ENCODE measurements at regions of chr13 and their contacts with region 1.

Region 1: DNA sequence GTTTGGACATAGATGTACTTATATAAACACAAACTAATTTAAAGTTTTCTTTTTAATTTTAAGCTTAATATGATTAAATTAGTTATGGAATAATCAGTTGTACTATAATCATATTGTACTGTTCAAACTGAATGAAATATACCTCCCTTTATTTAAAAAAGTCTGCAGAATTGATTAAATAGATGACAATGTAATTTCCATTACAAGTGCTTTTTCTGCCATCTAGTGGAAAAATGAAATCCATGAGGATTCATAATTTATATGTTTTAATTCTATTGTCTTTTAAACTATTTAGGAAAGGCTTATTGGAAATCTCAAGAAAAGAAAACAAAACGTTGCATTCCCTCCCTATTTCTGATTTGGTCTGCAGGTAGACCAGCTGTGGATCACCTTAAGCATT is 30.9 kb downstream of the MZT1 start:
- DNase-seq: peak; percentile 10
- ATAC-seq: no peak
- H3K4me3 ChIP-seq: no peak overlapping the region
- H3K27ac ChIP-seq: no peak overlapping the region
- H3K4me1 ChIP-seq: no peaks in the 10 kb centered on the region
- H3K27me3 ChIP-seq: no peaks in the 10 kb centered on the region; the same call in 1 of the 2 replicates
- CTCF ChIP-seq: peak; percentile 47
- POLR2A ChIP-seq: no peak
- RAD21 ChIP-seq: peak; percentile 50

Region 2: GRCh38 chr13:70960841-70961443 is 1735.6 kb before region 1 on chr13:
- CTCF ChIA-PET with region 1: no interaction called
- POLR2A ChIA-PET with region 1: no interaction called
- dilution Hi-C with region 1: no loop called
- in situ Hi-C with region 1: loop called (anchors 25 kb)
- intact Hi-C with region 1: loop called (anchors 10 kb)
- DNase-seq: peak; percentile 13
- ATAC-seq: no peak
- H3K4me3 ChIP-seq: no peak overlapping the region
- H3K27ac ChIP-seq: no peak overlapping the region
- H3K4me1 ChIP-seq: no peaks in the 10 kb centered on the region
- H3K27me3 ChIP-seq: no peaks in the 10 kb centered on the region
- CTCF ChIP-seq: peak; percentile 51
- POLR2A ChIP-seq: no peak
- RAD21 ChIP-seq: peak; percentile 48

Region 3: GRCh38 chr13:72643311-72643989 is 53.1 kb before region 1 on chr13:
- CTCF ChIA-PET with region 1: interaction called, 4 read pairs
- POLR2A ChIA-PET with region 1: no interaction called
- dilution Hi-C with region 1: no loop called
- in situ Hi-C with region 1: no loop called
- intact Hi-C with region 1: loop called (anchors 1 kb)
- DNase-seq: peak; percentile 44
- ATAC-seq: peak; percentile 60
- H3K4me3 ChIP-seq: no peak overlapping the region
- H3K27ac ChIP-seq: no peak overlapping the region
- H3K4me1 ChIP-seq: no peaks in the 10 kb centered on the region
- H3K27me3 ChIP-seq: no peaks in the 10 kb centered on the region; the same call in 1 of the 2 replicates
- CTCF ChIP-seq: peak; percentile 72
- POLR2A ChIP-seq: no peak
- RAD21 ChIP-seq: peak; percentile 47

Region 4: GRCh38 chr13:73025217-73026012 is 328.8 kb after region 1 on chr13:
- CTCF ChIA-PET with region 1: no interaction called
- POLR2A ChIA-PET with region 1: no interaction called
- dilution Hi-C with region 1: no loop called
- in situ Hi-C with region 1: no loop called
- intact Hi-C with region 1: no loop called
- DNase-seq: peak; percentile 47
- ATAC-seq: no peak
- H3K4me3 ChIP-seq: no peak overlapping the region
- H3K27ac ChIP-seq: no peak overlapping the region
- H3K4me1 ChIP-seq: no peaks in the 10 kb centered on the region
- H3K27me3 ChIP-seq: no peaks in the 10 kb centered on the region
- CTCF ChIP-seq: no peak
- POLR2A ChIP-seq: no peak
- RAD21 ChIP-seq: no peak